ENCODE measurements at regions of chr4 and their contacts with region 1.

Region 1: DNA sequence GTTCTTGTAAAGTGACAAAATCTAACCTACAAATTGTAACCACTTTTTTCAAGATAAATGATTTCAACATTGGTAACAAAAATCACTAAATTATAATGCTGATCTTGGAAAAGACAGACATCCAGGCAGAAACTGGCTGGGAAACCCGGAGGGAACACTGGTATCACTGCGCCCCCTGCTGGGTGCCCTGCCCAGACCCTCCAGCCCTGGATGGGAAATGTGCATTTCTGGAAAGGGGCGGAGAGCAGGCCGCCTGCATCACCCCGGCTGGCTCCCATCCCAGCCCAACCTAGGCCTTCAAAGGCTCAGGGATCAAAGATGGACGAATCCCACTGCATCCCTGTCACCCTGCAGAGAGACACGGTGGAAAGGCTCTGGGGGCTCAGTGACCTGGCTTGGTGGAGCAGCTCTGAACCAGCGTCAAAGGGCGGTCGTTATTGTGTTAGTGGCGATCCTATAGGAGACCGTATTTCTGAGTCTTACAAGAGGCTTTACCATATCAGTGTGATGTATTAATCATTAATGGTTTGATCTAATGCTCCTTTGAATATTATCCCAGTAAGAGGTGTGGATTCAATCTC is 37.3 kb downstream of the ACOX3 start:
- DNase-seq: no peak
- H3K4me3 Mint-ChIP-seq: no peak overlapping the region
- H3K27ac Mint-ChIP-seq: no peak overlapping the region
- H3K4me1 Mint-ChIP-seq: no peaks in the 10 kb centered on the region
- H3K27me3 Mint-ChIP-seq: no peaks in the 10 kb centered on the region

Region 2: GRCh38 chr4:8176547-8177399 is 226.5 kb before region 1 on chr4:
- intact Hi-C with region 1: loop called (anchors 1 kb)
- DNase-seq: peak; percentile 20
- H3K4me3 Mint-ChIP-seq: no peak overlapping the region
- H3K27ac Mint-ChIP-seq: no peak overlapping the region
- H3K4me1 Mint-ChIP-seq: no peaks in the 10 kb centered on the region
- H3K27me3 Mint-ChIP-seq: peaks cover 1% of the 10 kb centered on the region

Region 3: GRCh38 chr4:8267077-8267476 is 136.2 kb before region 1 on chr4:
- intact Hi-C with region 1: loop called (anchors 1 kb)
- DNase-seq: peak; percentile 2
- H3K4me3 Mint-ChIP-seq: no peak overlapping the region
- H3K27ac Mint-ChIP-seq: no peak overlapping the region
- H3K4me1 Mint-ChIP-seq: no peaks in the 10 kb centered on the region
- H3K27me3 Mint-ChIP-seq: peaks cover 15% of the 10 kb centered on the region